ENCODE measurements at regions of chrX and their contacts with region 1.

Region 1: DNA sequence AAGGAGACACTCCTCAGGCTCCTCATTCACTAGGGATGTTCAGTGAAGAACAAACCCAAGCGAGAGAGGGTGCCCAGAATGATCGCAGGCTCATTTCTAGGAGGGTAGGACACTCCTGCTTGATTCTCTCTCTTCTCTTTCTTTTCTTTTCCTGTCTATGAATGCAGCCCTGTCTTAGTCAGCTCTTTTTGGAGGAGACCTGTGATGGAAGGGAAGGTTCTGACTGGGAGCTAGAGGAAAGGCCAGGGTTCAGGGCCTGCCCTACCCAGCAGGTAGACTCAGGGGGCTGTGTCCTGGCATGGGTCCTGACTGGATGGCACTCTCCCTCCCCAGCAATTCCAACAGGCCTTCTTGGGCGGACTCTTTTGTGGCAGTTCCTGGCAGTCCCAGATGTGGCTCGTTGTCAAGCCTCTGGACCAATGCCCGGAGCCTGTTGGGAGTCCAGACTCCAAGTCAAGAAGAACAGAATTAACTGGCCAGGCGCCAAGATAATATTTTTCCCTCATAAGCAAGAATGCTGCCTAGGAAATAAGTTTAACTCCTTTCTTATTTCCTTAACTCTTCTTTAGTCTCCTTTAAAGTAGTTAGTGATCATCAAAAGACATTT is 139.4 kb upstream of the SCML1 start:
- DNase-seq: peak; percentile 35 to 41
- ATAC-seq: peak in 1 of 2 donors; percentile 68
- H3K4me3 ChIP-seq: no peak overlapping the region
- H3K27ac ChIP-seq: peak overlapping the region in 3 of 4 donors; percentile 9 to 50 (median 50)
- H3K4me1 ChIP-seq: no peaks in the 10 kb centered on the region
- H3K27me3 ChIP-seq: no peaks in the 10 kb centered on the region
- CTCF ChIP-seq: no peak
- POLR2A ChIP-seq: no peak

Region 2: DNA sequence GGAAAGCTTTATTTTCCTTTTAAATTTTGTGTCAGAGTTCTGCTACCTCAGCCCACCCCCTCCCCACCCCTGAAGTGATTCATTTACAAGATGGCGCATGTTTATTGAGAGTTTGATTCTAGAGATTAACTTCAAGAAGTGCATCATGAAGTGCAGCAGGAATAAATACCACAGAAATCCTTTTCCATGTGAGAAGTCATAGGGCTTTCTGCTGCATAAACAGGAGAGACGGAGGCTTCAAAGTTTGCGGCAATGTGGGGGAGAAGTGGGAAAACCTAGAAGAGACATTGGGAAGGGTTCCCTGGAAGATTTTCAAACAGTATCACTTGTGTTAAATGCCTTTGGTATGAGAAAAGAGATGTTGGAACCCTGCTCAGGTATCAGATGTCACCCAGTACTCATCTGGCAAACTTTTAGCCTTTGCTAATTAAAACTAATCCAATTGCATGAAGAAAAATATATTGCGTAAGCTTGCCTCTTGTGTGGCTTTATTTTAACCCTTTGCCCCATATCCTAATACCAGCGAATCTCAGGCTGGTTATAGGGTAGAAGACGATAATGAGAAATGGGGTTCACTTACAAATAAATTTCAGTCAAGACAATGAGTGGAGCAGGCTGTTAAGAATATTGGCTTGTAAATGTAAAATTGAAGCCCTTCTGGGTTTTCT is 207.5 kb before region 1 on chrX:
- in situ Hi-C with region 1: no loop called
- intact Hi-C with region 1: no loop called
- DNase-seq: no peak
- ATAC-seq: no peak
- H3K4me3 ChIP-seq: no peak overlapping the region
- H3K27ac ChIP-seq: no peak overlapping the region
- H3K4me1 ChIP-seq: no peaks in the 10 kb centered on the region
- H3K27me3 ChIP-seq: no peaks in the 10 kb centered on the region
- CTCF ChIP-seq: no peak
- POLR2A ChIP-seq: no peak

Region 3: DNA sequence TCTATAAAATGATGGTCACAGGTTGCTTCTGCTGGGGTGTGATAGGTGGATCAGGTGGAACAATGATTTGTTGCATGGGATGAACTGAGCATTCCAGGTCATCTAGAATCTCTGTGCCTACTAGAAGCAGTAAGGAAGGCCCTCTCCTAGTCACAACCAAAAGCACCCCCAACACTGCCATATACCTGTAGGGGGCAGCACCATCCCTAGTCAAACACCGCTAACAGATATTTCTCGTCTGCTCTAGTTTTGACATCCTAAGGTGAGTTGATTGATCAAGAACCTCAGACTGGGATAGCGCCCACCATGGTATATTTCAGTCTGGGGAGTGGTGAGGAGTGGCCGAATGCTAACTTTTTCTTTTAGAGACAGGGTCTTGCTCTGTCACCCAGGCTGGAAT is 62.7 kb before region 1 on chrX:
- in situ Hi-C with region 1: no loop called
- intact Hi-C with region 1: no loop called
- DNase-seq: peak in 1 of 2 donors; percentile 11
- ATAC-seq: no peak
- H3K4me3 ChIP-seq: no peak overlapping the region
- H3K27ac ChIP-seq: no peak overlapping the region
- H3K4me1 ChIP-seq: no peaks in the 10 kb centered on the region
- H3K27me3 ChIP-seq: no peaks in the 10 kb centered on the region
- CTCF ChIP-seq: peak in 3 of 5 experiments; percentile 7 to 48 (median 33)
- POLR2A ChIP-seq: no peak

Region 4: DNA sequence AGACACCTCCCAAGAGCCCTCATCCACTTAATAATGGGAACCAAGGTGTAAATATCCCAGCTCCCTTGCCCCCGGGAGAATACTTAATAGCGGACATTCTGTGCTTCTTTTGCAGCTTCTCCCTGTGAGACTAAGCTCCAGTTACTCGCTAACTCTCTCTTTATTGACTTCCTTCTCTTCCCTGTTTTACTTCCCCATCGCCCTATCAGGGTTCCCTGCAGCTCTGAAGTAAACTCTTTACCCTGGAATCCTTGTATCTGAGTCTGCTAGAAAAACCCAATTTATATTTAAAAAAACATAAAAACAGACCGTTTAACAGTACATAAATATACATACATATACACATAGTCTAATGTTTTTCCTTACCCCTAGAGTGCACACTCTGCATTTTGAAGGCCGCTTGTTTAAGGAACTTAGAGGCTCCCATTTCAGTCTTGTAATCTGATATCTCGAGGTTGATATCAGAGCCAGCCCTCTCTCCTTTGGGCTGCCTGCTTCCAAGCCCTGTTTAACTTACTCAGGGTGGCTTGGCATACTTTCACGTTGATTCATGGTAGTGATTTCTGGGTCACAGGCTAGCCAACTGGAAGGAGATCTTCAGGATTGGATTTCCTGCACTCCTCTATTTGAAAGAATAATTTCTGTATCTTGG is 38.1 kb before region 1 on chrX:
- in situ Hi-C with region 1: loop called in 1 of 4 experiments (anchors 5 kb)
- intact Hi-C with region 1: no loop called
- DNase-seq: peak; percentile 42 to 55
- ATAC-seq: peak; percentile 91 to 99
- H3K4me3 ChIP-seq: no peak overlapping the region
- H3K27ac ChIP-seq: peak overlapping the region in 3 of 4 donors; percentile 22 to 59 (median 34)
- H3K4me1 ChIP-seq: peaks cover 10 to 12% of the 10 kb centered on the region in 2 donors
- H3K27me3 ChIP-seq: no peaks in the 10 kb centered on the region
- CTCF ChIP-seq: no peak
- POLR2A ChIP-seq: no peak